ENCODE measurements at regions of chr4 and their contacts with region 1.

Region 1: GRCh38 chr4:38062088-38062893 is 102.1 kb downstream of the PTTG2 start:
- DNase-seq: peak; percentile 82
- ATAC-seq: peak; percentile 78

Region 2: DNA sequence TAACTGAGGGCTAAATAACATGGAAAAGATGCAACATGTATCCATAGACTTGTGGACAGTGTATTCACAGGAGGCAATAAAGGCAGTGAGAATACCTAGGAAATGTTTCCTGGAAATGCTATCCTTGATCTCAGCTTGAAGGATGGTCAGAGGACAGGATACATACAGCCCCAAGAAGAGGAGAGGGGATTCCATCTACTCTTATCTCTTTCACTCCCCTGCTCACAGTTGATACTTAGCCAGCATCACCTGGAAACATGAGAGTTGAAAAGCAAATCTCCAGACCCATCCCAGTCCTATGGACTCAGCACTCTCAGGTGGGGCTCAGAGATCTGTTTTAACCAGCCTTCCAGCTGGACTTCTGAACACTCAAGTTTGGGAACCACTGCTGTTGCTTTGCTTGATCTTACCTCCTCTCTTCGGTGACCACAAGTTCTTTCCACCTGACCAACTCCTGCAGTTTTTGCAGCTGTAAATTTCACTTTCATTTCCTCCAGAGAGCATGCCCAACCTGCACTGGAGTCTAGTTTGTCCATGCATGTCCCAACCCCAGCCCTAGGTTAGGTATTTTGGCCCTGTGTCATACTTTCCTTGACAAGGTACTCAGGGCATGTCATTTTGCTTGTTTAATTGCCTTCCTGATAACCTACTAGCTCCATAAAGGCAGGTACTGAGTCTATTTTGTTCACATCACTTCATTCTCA is 386.6 kb before region 1 on chr4:
- intact Hi-C with region 1: no loop called
- DNase-seq: no peak
- ATAC-seq: no peak

Region 3: GRCh38 chr4:37788819-37789218 is 273.5 kb before region 1 on chr4:
- intact Hi-C with region 1: no loop called
- DNase-seq: no peak
- ATAC-seq: no peak

Region 4: GRCh38 chr4:38319456-38320342 is 257.4 kb after region 1 on chr4:
- intact Hi-C with region 1: loop called in 1 of 2 experiments (anchors 10 kb)
- DNase-seq: peak; percentile 91
- ATAC-seq: peak; percentile 82 to 86

Region 5: DNA sequence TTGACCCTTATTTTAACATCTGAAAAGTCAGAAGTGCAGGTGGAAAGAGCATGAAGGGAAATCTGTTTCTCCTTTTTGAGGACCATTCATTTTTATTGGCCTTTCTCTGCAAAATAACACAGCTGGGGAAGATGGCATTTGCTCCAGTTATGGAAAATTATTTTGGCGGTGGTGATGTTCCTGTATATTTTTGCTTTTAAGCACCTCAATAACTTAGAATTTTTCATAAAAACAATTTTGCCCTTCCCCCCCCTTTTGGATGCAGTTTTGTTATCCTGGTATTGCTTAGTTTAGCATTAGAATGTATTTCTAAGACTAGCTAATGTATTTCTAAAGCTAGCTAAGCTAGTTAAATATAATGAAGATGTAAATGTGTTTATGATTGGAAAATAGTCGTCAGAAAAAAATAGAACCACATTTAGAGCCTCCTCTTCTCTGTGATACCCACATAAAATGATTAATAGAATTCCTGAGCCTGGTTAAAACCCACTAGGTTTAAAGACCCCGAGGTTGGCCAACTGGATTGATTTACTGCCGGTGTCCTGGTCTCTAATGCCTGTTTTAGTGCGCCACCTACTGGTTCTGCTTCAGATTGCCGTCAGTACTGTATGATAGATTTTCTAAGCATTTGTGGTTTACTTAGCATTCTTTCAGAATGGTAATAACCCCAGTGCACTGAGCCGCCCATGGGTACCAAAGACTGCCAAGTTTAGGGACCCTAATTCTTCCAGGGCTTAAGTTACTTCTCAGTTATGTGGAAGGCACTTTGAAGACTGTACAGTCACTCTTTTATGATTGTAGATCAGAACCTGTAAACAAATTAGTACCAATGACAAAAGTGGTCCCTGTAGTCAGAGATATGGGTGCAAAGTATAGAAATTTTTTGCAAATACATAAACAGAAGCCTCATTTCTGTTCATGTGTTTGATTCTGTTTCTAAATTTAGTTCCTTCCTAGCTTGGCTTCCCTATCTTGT is 613.1 kb after region 1 on chr4:
- intact Hi-C with region 1: loop called in 1 of 2 experiments (anchors 5 kb)
- DNase-seq: peak; percentile 77
- ATAC-seq: peak; percentile 40 to 41

Region 6: DNA sequence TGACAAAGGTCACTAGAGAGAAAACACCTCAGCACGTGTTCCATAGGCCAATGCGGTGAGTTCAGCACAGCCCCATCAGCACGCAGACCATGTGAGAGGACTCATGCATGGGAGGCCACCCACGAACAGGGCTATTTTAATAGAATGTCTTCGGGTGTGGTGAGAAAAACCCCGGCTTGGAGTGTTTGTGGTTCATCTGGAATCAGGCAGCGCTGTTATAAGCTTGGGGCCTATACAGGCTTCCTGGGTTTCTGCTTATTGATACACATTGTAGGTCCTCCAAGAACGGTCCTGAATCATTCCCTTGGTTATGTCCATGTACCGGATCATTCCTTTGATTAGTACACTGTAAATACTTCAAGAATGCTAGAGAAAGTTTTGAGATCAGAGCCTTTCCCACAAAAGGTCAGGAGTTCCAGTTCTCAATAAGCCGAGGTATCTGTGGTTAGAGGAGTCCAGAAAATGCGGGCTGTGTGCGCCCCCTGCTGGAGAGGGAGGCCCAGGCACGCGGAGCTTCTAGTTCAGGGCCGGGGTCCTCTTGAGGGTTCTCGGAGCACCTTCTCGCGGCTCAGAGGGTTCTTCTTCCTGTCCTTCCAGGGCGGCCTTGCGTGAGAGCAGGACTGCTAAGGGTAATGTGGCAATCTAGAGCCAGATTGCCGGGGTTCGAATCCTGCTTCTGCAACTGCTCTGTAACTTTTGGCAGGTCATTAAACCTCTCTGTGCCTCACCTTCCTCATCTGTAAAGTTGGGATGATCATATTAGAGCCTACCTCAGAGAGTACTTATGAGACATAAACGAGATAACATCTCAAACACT is 668.7 kb after region 1 on chr4:
- intact Hi-C with region 1: loop called in 1 of 2 experiments (anchors 5 kb)
- DNase-seq: peak; percentile 82
- ATAC-seq: peak; percentile 87 to 90

Measured in left cardiac atrium (tissue), 4 donors.